ENCODE measurements at regions of chr1 and their contacts with region 1.

Region 1: GRCh38 chr1:212035123-212035834 is at the starts of genes DTL and INTS7:
- DNase-seq: peak; percentile 98
- H3K4me3 ChIP-seq: peak within 1 kb of the TSS; percentile 44 to 58
- H3K27ac ChIP-seq: peak within 1 kb of the TSS; percentile 85 to 91
- H3K4me1 ChIP-seq: peaks cover 9% of the 10 kb centered on the region
- H3K27me3 ChIP-seq: no peaks in the 10 kb centered on the region
- CTCF ChIP-seq: peak; percentile 76 to 97 (median 89)
- POLR2A ChIP-seq: peak; percentile 45
- total RNA-seq, gene DTL: 1.5 to 7.1 TPM
- total RNA-seq, gene INTS7: 12.5 to 15.5 TPM

Region 2: GRCh38 chr1:211680752-211681327 is 354.4 kb before region 1 on chr1:
- intact Hi-C with region 1: loop called (anchors 10 kb)
- DNase-seq: peak; percentile 59
- H3K4me3 ChIP-seq: no peak overlapping the region
- H3K27ac ChIP-seq: no peak overlapping the region
- H3K4me1 ChIP-seq: no peaks in the 10 kb centered on the region
- H3K27me3 ChIP-seq: no peaks in the 10 kb centered on the region
- CTCF ChIP-seq: peak in 3 of 4 experiments; percentile 59 to 85 (median 78)
- POLR2A ChIP-seq: no peak

Region 3: GRCh38 chr1:212110617-212111016 is 75.3 kb after region 1 on chr1:
- intact Hi-C with region 1: no loop called
- DNase-seq: no peak
- H3K4me3 ChIP-seq: no peak overlapping the region
- H3K27ac ChIP-seq: no peak overlapping the region
- H3K4me1 ChIP-seq: no peaks in the 10 kb centered on the region
- H3K27me3 ChIP-seq: no peaks in the 10 kb centered on the region
- CTCF ChIP-seq: no peak
- POLR2A ChIP-seq: no peak

Region 4: DNA sequence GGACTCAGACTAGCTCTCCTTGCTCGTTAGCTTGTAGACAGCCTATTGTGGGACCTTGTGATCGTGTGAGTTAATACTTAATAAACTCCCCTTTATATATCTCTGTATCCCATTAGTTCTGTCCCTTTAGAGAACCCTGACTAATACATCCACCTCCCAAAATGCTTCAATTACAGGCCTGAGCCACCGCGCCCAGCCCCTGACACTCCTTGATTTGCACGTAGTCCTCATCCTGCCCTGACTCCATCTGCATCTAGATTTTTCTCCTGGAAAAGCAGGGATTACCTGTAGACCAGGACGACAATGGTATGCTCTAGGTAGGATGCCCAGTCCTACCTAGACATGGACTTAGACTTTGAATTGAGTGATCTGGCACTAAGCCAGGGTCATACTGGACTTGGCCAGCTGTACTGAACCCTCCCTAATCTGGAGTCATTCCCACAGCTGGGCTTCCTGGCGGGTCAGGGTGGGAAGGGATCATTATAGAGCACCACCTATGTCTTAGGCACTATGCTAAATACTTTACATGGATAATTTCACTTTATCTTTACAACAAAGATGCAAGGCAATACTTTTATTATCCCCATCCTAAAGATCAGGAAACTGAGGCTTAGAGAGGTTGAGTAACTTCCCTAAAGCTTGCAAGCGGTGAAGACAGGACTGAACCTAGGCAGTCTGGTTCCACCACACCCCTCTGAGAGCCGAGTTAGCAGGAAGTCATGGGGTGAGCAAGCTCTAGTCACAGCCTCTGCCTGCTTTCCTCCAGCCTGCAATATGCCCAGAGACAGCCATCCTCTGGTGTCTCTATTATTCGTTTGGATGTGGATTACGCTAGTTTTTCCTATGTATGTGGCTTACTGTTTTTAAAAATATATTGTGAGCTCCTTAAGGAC is 89.7 kb after region 1 on chr1:
- intact Hi-C with region 1: no loop called
- DNase-seq: no peak
- H3K4me3 ChIP-seq: no peak overlapping the region
- H3K27ac ChIP-seq: no peak overlapping the region
- H3K4me1 ChIP-seq: no peaks in the 10 kb centered on the region
- H3K27me3 ChIP-seq: no peaks in the 10 kb centered on the region
- CTCF ChIP-seq: no peak
- POLR2A ChIP-seq: no peak

Region 5: DNA sequence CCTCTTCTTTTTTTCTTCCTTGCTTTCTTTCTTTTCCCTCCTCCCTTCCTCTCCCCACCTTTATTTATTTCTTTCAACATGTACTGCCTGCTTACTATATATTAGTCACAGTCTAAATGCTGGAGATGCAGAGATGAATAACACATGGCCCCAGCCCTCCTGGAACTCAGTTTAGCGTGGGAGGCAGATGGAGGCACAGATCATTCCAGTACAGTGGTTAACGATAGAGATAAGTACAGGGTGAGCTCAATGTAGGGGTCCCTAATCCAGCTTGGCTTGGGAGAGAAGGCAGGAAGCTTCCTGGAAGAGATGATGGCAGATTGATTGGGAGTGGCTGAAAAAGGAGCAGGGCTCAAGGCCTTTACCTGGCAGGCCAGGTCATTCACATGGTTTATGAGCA is 194.4 kb after region 1 on chr1:
- intact Hi-C with region 1: no loop called
- DNase-seq: no peak
- H3K4me3 ChIP-seq: no peak overlapping the region
- H3K27ac ChIP-seq: no peak overlapping the region
- H3K4me1 ChIP-seq: no peaks in the 10 kb centered on the region
- H3K27me3 ChIP-seq: no peaks in the 10 kb centered on the region
- CTCF ChIP-seq: no peak
- POLR2A ChIP-seq: no peak